Gastrocnemius medialis (tissue), 4 donors: ENCODE measurements at regions of chr9 and their contacts with region 1.

Region 1: GRCh38 chr9:14322211-14323082 is 8.5 kb upstream of the NFIB start:
- DNase-seq: peak; percentile 86 to 92
- ATAC-seq: peak; percentile 67 to 76
- H3K4me3 ChIP-seq: peak overlapping the region; percentile 69 to 79 (median 77)
- H3K27ac ChIP-seq: peak overlapping the region; percentile 92 to 99 (median 98)
- H3K4me1 ChIP-seq: peaks cover 70 to 84% of the 10 kb centered on the region in 2 donors
- H3K27me3 ChIP-seq: no peaks in the 10 kb centered on the region
- CTCF ChIP-seq: peak; percentile 59 to 77 (median 66)
- POLR2A ChIP-seq: peak; percentile 62 to 78

Region 2: GRCh38 chr9:14018081-14018480 is 304.4 kb before region 1 on chr9:
- in situ Hi-C with region 1: loop called in 2 of 4 experiments (anchors 10 to 25 kb)
- intact Hi-C with region 1: loop called (anchors 5 kb)
- DNase-seq: peak in 1 of 2 donors; percentile 45
- ATAC-seq: peak; percentile 34 to 56
- H3K4me3 ChIP-seq: no peak overlapping the region
- H3K27ac ChIP-seq: peak overlapping the region; percentile 21 to 70 (median 38)
- H3K4me1 ChIP-seq: peaks cover 20 to 32% of the 10 kb centered on the region in 2 donors
- H3K27me3 ChIP-seq: no peaks in the 10 kb centered on the region
- CTCF ChIP-seq: no peak
- POLR2A ChIP-seq: no peak

Region 3: DNA sequence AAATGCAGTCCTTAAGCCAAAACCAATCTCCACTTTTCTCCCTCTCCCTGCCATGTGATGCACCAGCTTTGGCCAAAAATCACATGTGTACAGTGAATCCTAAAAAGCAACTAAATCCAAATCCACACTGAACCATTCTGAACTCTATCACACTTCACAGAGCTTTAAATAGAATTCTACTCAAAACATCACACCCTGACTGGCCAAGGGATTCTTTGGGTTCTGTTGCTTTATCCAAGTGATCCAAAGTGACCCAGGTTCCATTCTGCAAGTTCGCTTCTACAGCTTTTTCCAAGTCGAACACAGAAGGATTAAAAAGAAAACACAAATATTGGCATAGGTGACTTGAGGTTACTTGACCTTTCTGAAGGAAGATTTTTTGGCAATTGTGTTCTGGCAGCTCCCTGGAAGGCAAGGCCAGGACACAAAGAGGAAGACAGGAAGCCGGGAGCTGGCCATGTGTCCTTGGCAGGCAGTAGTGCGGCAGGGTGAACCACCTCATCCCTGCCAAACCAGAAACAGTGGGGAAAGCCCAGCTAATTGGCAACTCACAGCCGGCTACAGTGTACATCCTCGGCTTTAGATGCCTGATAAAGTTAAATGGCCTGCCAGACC is 123.5 kb before region 1 on chr9:
- in situ Hi-C with region 1: no loop called
- intact Hi-C with region 1: loop called (anchors 5 kb)
- DNase-seq: peak; percentile 78 to 87
- ATAC-seq: peak; percentile 85 to 88
- H3K4me3 ChIP-seq: peak overlapping the region; percentile 18 to 25 (median 22)
- H3K27ac ChIP-seq: peak overlapping the region; percentile 71 to 79 (median 79)
- H3K4me1 ChIP-seq: peaks cover 52 to 59% of the 10 kb centered on the region in 2 donors
- H3K27me3 ChIP-seq: no peaks in the 10 kb centered on the region
- CTCF ChIP-seq: no peak
- POLR2A ChIP-seq: no peak

Region 4: GRCh38 chr9:14283276-14283675 is 39.2 kb before region 1 on chr9:
- in situ Hi-C with region 1: no loop called
- intact Hi-C with region 1: no loop called
- DNase-seq: no peak
- ATAC-seq: no peak
- H3K4me3 ChIP-seq: no peak overlapping the region
- H3K27ac ChIP-seq: peak overlapping the region in 1 of 4 donors; percentile 16
- H3K4me1 ChIP-seq: peaks cover 38 to 58% of the 10 kb centered on the region in 2 donors
- H3K27me3 ChIP-seq: no peaks in the 10 kb centered on the region
- CTCF ChIP-seq: no peak
- POLR2A ChIP-seq: no peak

Region 5: DNA sequence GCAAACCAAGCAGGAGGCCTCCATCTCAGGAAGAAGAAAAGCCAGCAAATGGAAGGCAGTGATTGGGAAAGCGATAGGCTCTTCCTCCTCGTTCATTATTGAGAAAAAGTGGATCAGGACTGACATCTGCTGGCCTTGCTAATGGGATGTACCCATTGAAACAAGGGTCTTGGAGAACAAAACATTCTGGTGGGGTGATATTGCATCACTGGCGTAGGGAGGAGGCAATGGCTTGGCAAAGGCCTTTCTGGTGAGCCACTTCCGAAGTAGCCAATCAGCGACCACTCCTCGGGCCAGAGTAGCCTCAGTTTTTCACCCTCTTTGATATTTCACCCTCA is 78.2 kb after region 1 on chr9:
- in situ Hi-C with region 1: no loop called
- intact Hi-C with region 1: loop called (anchors 1 kb)
- DNase-seq: peak; percentile 19 to 55
- ATAC-seq: peak; percentile 74 to 85
- H3K4me3 ChIP-seq: peak overlapping the region in 2 of 4 donors; percentile 10 to 39
- H3K27ac ChIP-seq: peak overlapping the region; percentile 2 to 62 (median 10)
- H3K4me1 ChIP-seq: peaks cover 5 to 33% of the 10 kb centered on the region in 2 donors
- H3K27me3 ChIP-seq: no peaks in the 10 kb centered on the region
- CTCF ChIP-seq: peak; percentile 40 to 68 (median 56)
- POLR2A ChIP-seq: no peak

Region 6: DNA sequence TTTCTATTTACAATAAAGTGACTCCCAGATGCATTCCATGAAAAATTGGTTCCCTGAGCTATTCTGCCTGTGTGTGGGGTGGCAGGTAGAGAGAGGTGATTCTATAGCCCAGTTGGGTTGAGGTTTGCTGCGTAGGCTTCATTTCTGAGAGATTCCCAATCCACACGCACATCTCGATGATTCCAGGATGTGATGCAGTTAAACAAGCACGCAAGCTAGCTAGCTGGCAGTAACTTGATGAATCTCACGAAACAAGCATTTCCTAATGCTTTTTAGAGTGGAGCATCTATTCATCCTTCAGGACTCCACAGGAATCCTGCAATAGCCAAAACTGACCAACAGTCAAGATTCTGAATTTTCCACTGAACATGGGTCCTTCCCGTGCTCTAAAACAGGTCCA is 443.9 kb after region 1 on chr9:
- in situ Hi-C with region 1: no loop called
- intact Hi-C with region 1: no loop called
- DNase-seq: no peak
- ATAC-seq: no peak
- H3K4me3 ChIP-seq: no peak overlapping the region
- H3K27ac ChIP-seq: no peak overlapping the region
- H3K4me1 ChIP-seq: peaks cover 0 to 5% of the 10 kb centered on the region in 2 donors
- H3K27me3 ChIP-seq: no peaks in the 10 kb centered on the region
- CTCF ChIP-seq: no peak
- POLR2A ChIP-seq: no peak

Region 7: GRCh38 chr9:14779566-14780022 is 457.1 kb after region 1 on chr9:
- in situ Hi-C with region 1: no loop called
- intact Hi-C with region 1: loop called (anchors 10 kb)
- DNase-seq: peak; percentile 66 to 79
- ATAC-seq: peak; percentile 70 to 78
- H3K4me3 ChIP-seq: peak overlapping the region; percentile 20 to 34 (median 28)
- H3K27ac ChIP-seq: peak overlapping the region; percentile 77 to 94 (median 88)
- H3K4me1 ChIP-seq: peaks cover 27 to 51% of the 10 kb centered on the region in 2 donors
- H3K27me3 ChIP-seq: no peaks in the 10 kb centered on the region
- CTCF ChIP-seq: no peak
- POLR2A ChIP-seq: peak; percentile 28 to 58